PC-3 (cell line): ENCODE measurements at regions of chr17 and their contacts with region 1.

Region 1: GRCh38 chr17:80761110-80761871 is 216.7 kb downstream of the RPTOR start:
- DNase-seq: peak; percentile 95
- ATAC-seq: peak; percentile 82
- H3K4me3 ChIP-seq: peak overlapping the region; percentile 54
- H3K27ac ChIP-seq: peak overlapping the region; percentile 95
- H3K4me1 ChIP-seq: peaks cover 32% of the 10 kb centered on the region
- H3K27me3 ChIP-seq: no peaks in the 10 kb centered on the region
- CTCF ChIP-seq: no peak

Region 2: GRCh38 chr17:80187515-80187941 is 573.8 kb before region 1 on chr17:
- CTCF ChIA-PET with region 1: no interaction called
- POLR2A ChIA-PET with region 1: interaction called, 12 read pairs
- intact Hi-C with region 1: no loop called
- DNase-seq: peak; percentile 73
- ATAC-seq: peak; percentile 89
- H3K4me3 ChIP-seq: peak overlapping the region; percentile 66
- H3K27ac ChIP-seq: peak overlapping the region; percentile 54
- H3K4me1 ChIP-seq: peaks cover 13% of the 10 kb centered on the region
- H3K27me3 ChIP-seq: no peaks in the 10 kb centered on the region
- CTCF ChIP-seq: no peak

Region 3: DNA sequence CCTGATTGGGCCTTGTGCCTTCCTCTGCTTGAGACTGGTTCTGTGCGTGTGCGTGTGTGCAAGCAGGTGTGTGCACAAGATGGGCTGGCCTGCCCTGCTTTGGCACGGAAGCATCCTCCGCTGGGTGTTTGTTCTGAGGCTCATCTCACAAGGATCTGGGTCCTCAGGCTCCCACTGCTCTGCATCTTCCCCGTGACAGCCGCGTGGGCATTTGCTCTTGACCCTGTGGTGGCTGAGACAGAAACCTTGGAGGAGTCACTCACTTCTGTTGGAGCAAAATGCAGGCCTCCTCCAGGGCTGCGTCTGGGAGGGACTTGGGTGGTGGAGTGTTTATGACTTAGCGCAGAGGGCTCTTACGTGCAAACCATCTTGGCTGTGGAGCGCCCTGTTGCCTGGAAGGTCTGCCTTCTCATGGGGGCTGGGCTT is 97.5 kb before region 1 on chr17:
- CTCF ChIA-PET with region 1: no interaction called
- POLR2A ChIA-PET with region 1: no interaction called
- intact Hi-C with region 1: no loop called
- DNase-seq: no peak
- ATAC-seq: no peak
- H3K4me3 ChIP-seq: no peak overlapping the region
- H3K27ac ChIP-seq: no peak overlapping the region
- H3K4me1 ChIP-seq: no peaks in the 10 kb centered on the region
- H3K27me3 ChIP-seq: no peaks in the 10 kb centered on the region
- CTCF ChIP-seq: no peak

Region 4: DNA sequence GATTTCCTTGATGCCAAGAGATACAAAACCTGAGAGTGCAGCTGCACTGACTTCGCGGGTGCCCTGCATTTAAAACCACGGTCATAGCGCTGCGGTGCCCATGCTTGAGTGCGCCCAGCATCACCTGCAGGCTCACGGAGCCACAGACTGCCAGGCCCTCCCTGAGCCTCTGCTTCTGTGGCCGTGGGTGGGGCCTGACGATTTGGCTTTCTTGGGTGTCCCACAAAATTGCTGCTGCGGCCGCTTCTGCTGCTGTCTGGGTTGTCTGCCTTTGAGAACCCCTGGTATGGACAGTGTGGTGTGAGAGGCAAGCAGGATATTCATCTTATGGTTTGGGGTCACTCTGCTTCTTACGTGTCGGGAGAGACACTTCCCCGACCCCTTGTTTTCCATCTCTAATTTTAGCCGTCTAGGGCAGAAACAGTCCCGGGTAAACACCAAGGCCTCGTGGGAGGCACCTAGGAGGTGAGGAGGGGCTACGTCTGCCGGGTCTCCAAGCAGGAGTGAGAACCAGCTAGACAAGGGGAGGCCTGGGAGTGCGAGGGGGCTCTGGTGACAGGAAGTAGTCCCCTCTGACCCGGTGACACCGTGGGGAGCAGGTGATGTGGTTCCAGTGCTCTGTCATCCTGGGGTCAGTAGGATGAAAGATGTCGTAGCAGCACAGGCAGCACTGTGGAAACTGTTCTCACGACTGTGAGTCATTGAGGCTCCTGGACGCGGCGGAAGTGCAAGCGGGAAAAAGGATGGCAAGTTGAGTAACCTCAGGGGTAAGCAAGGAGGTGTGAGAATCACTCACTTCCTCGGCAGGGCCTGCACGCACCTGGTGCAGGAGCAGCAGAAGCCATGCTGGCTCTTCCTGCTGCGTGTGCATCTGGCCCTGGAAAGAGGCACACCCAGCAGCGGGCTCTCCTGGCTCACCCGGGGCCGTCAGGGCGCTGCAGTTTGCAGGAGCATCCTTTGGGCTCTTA is 40.4 kb before region 1 on chr17:
- CTCF ChIA-PET with region 1: no interaction called
- POLR2A ChIA-PET with region 1: no interaction called
- intact Hi-C with region 1: loop called (anchors 2 kb)
- DNase-seq: peak; percentile 97
- ATAC-seq: peak; percentile 91
- H3K4me3 ChIP-seq: no peak overlapping the region
- H3K27ac ChIP-seq: peak overlapping the region; percentile 95
- H3K4me1 ChIP-seq: peaks cover 51% of the 10 kb centered on the region
- H3K27me3 ChIP-seq: no peaks in the 10 kb centered on the region
- CTCF ChIP-seq: no peak

Region 5: GRCh38 chr17:80791758-80792284 is 30.5 kb after region 1 on chr17:
- CTCF ChIA-PET with region 1: interaction called, 3 read pairs
- POLR2A ChIA-PET with region 1: no interaction called
- intact Hi-C with region 1: loop called (anchors 1 kb)
- DNase-seq: peak; percentile 99
- ATAC-seq: peak; percentile 94
- H3K4me3 ChIP-seq: peak overlapping the region; percentile 25; the same call in 1 of the 2 replicates
- H3K27ac ChIP-seq: peak overlapping the region; percentile 95
- H3K4me1 ChIP-seq: peaks cover 58% of the 10 kb centered on the region
- H3K27me3 ChIP-seq: no peaks in the 10 kb centered on the region
- CTCF ChIP-seq: no peak

Region 6: DNA sequence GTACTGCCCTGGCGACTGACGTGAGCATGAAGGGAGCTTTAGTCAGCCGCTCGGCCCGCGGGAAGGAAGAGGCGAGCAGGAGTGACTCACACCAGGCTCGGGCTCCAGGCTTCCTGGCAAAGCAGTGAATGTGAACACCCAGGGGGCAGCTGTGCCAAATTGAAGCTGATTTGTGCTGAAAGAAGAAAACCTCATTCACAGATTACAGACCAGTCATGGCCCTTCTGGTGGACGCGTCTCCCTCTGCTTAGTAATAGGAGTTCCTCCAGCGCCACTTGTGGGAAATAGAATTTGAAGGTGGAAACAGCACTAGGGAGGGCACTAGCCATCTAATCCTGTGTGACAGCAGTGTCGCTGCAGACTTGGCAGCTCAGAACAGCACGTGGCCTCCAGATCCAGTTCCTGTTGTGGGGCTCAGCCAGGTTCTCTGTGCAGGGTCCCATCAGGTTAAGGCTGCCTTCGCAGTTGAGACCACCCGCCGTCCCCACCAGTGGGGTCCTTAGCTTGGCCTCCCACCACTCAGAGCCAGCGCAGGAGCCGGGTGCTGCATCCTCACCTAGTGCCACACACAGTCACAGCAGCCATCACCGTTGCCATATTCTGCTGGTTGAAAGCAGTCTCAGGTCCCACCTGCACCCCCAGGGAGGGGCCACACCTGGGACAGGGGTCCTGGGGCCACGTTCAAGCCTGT is 65.8 kb after region 1 on chr17:
- CTCF ChIA-PET with region 1: no interaction called
- POLR2A ChIA-PET with region 1: no interaction called
- intact Hi-C with region 1: loop called (anchors 1 kb)
- DNase-seq: peak; percentile 96
- ATAC-seq: peak; percentile 99
- H3K4me3 ChIP-seq: no peak overlapping the region
- H3K27ac ChIP-seq: peak overlapping the region; percentile 96
- H3K4me1 ChIP-seq: peaks cover 36% of the 10 kb centered on the region
- H3K27me3 ChIP-seq: no peaks in the 10 kb centered on the region
- CTCF ChIP-seq: no peak; the same call in 1 of the 2 replicates

Region 7: GRCh38 chr17:80892019-80892855 is 130.9 kb after region 1 on chr17:
- CTCF ChIA-PET with region 1: no interaction called
- POLR2A ChIA-PET with region 1: no interaction called
- intact Hi-C with region 1: loop called (anchors 1 kb)
- DNase-seq: peak; percentile 98
- ATAC-seq: peak; percentile 72
- H3K4me3 ChIP-seq: peak overlapping the region; percentile 53
- H3K27ac ChIP-seq: peak overlapping the region; percentile 91
- H3K4me1 ChIP-seq: peaks cover 36% of the 10 kb centered on the region
- H3K27me3 ChIP-seq: no peaks in the 10 kb centered on the region
- CTCF ChIP-seq: no peak